Natural killer cell (primary cell): ENCODE measurements at regions of chr2 and their contacts with region 1.

Region 1: GRCh38 chr2:68362069-68362468 is 3.0 kb upstream of the PLEK start:
- DNase-seq: peak; percentile 78 to 94
- ATAC-seq: peak; percentile 66 to 88 (median 72)
- H3K4me3 ChIP-seq: peak overlapping the region; percentile 20
- H3K4me3 Mint-ChIP-seq: peak overlapping the region; percentile 94
- H3K27ac ChIP-seq: peak overlapping the region; percentile 84
- H3K27ac Mint-ChIP-seq: peak overlapping the region; percentile 95 to 97
- H3K4me1 ChIP-seq: peaks cover 33% of the 10 kb centered on the region
- H3K4me1 Mint-ChIP-seq: peaks cover 61 to 63% of the 10 kb centered on the region in 2 donors
- H3K27me3 ChIP-seq: no peaks in the 10 kb centered on the region
- H3K27me3 Mint-ChIP-seq: no peaks in the 10 kb centered on the region
- CTCF ChIP-seq: peak; percentile 81

Region 2: GRCh38 chr2:68251187-68251854 is 110.7 kb before region 1 on chr2:
- intact Hi-C with region 1: loop called (anchors 5 kb)
- DNase-seq: peak; percentile 62 to 93
- ATAC-seq: peak; percentile 65 to 79 (median 66)
- H3K4me3 ChIP-seq: peak overlapping the region; percentile 80
- H3K4me3 Mint-ChIP-seq: peak overlapping the region; percentile 94
- H3K27ac ChIP-seq: peak overlapping the region; percentile 95
- H3K27ac Mint-ChIP-seq: peak overlapping the region in 1 of 2 donors; percentile 97
- H3K4me1 ChIP-seq: peaks cover 15% of the 10 kb centered on the region
- H3K4me1 Mint-ChIP-seq: peaks cover 28 to 41% of the 10 kb centered on the region in 2 donors
- H3K27me3 ChIP-seq: no peaks in the 10 kb centered on the region
- H3K27me3 Mint-ChIP-seq: peaks cover 0 to 3% of the 10 kb centered on the region in 2 donors
- CTCF ChIP-seq: peak; percentile 69

Region 3: DNA sequence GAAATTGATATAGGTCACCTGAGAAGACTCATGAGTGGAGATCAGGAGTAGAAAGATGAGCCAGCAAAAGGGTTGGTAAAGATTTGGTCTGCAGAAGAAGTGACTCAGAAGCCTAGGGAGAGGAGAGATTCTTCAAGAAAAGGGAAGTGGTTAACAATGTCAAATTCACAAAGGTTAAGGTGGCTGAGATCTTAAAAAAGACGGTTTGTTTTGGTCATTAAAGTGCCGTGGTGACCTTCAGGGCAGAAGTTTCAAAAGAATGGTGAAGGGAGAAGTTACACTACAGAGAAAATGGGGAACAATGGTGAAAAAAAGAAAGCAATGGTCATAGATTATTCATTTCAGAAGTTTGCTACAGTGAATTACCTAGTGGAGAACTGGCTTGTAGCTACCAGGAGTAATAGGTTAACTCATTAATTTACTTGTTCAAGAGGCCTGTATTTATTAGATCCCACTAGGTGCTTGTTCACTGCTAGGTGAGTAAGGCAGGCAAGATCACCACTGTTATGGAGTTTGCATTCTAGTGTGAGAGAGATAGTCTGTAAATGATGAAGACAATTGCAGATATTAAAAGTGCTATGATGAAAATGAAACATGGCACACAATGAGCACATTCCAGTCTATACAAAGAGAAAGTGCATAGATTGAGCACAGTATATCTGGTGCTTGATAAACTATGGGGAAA is 62.0 kb after region 1 on chr2:
- intact Hi-C with region 1: loop called (anchors 1 kb)
- DNase-seq: peak in 1 of 2 donors; percentile 50
- ATAC-seq: peak; percentile 76 to 84 (median 82)
- H3K4me3 ChIP-seq: no peak overlapping the region
- H3K4me3 Mint-ChIP-seq: no peak overlapping the region
- H3K27ac ChIP-seq: peak overlapping the region; percentile 67
- H3K27ac Mint-ChIP-seq: no peak overlapping the region
- H3K4me1 ChIP-seq: peaks cover 43% of the 10 kb centered on the region
- H3K4me1 Mint-ChIP-seq: peaks cover 41 to 49% of the 10 kb centered on the region in 2 donors
- H3K27me3 ChIP-seq: no peaks in the 10 kb centered on the region
- H3K27me3 Mint-ChIP-seq: no peaks in the 10 kb centered on the region
- CTCF ChIP-seq: no peak

Region 4: GRCh38 chr2:68516051-68516955 is 154.2 kb after region 1 on chr2:
- intact Hi-C with region 1: loop called (anchors 10 kb)
- DNase-seq: no peak
- ATAC-seq: peak in 2 of 3 donors; percentile 42 to 59
- H3K4me3 ChIP-seq: no peak overlapping the region
- H3K4me3 Mint-ChIP-seq: no peak overlapping the region
- H3K27ac ChIP-seq: no peak overlapping the region
- H3K27ac Mint-ChIP-seq: peak overlapping the region in 1 of 2 donors; percentile 64
- H3K4me1 ChIP-seq: no peaks in the 10 kb centered on the region
- H3K4me1 Mint-ChIP-seq: no peaks in the 10 kb centered on the region
- H3K27me3 ChIP-seq: no peaks in the 10 kb centered on the region
- H3K27me3 Mint-ChIP-seq: no peaks in the 10 kb centered on the region
- CTCF ChIP-seq: no peak

Region 5: DNA sequence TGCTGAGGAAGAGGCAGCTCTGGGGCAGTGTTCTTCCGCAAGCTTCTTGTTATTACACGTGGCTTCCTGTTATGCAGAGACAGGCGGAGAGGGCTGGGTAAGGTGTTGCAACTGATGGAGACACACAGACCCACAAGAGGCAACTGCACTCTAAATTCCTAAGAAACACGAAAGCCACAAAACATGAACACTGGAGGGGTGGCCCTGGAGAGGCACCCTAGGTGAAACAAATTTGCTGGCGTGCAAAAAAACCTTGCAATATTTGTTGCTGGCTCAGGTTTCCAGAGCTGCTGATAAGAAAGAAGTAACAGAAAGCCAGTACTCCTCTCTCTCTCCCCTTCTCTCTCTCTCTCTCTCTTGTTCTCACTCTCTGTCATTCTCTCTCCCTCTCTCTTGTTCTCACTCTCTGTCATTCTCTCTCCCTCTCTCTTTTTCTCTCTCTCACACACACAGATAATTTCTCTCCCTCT is 404.3 kb after region 1 on chr2:
- intact Hi-C with region 1: loop called (anchors 5 kb)
- DNase-seq: peak; percentile 66 to 88
- ATAC-seq: peak; percentile 56 to 84 (median 76)
- H3K4me3 ChIP-seq: peak overlapping the region; percentile 6
- H3K4me3 Mint-ChIP-seq: peak overlapping the region; percentile 81
- H3K27ac ChIP-seq: peak overlapping the region; percentile 96
- H3K27ac Mint-ChIP-seq: peak overlapping the region in 1 of 2 donors; percentile 93
- H3K4me1 ChIP-seq: peaks cover 79% of the 10 kb centered on the region
- H3K4me1 Mint-ChIP-seq: peaks cover 92 to 98% of the 10 kb centered on the region in 2 donors
- H3K27me3 ChIP-seq: no peaks in the 10 kb centered on the region
- H3K27me3 Mint-ChIP-seq: peaks cover 0 to 4% of the 10 kb centered on the region in 2 donors
- CTCF ChIP-seq: no peak